Mammary epithelial cell (primary cell): ENCODE measurements at regions of chr11 and their contacts with region 1.

Region 1: DNA sequence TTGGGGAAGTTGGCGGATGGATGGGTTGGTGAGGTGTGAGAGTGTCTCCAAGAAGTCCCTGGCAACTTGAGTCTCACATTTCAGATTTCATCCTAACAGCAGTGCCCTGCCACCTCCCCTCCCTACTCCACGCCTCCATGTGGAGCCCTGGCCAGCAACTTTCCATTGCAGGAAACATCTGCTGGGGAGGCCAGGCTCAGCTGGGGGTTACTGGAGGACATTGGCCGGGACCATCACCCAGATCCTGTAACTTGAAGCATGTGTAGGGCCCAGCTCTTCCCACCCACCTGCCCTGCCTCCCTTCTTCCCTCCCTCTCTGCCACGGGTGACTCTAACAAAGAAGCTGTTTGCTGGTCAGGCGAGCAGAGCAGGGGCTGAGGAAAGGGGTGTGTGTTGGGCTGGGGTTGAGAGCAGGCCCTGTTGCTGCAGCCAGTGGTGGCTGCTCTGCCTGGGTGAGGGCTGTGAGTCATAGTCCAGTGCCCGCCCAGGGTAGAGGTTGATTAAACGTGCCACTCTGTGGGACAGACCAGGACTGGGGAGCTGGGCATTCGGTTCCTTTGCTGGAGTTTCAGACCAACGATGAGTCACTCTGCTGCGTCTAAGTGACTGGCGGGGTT is 64.0 kb downstream of the SCN3B start:
- DNase-seq: peak; percentile 11
- H3K4me3 ChIP-seq: no peak overlapping the region
- H3K27ac ChIP-seq: no peak overlapping the region
- H3K4me1 ChIP-seq: no peaks in the 10 kb centered on the region
- H3K27me3 ChIP-seq: no peaks in the 10 kb centered on the region
- CTCF ChIP-seq: no peak

Region 2: GRCh38 chr11:123525511-123525918 is 64.9 kb before region 1 on chr11:
- CTCF ChIA-PET with region 1: no interaction called
- dilution Hi-C with region 1: loop called (anchors 10 kb)
- in situ Hi-C with region 1: no loop called
- intact Hi-C with region 1: no loop called
- DNase-seq: no peak
- H3K4me3 ChIP-seq: peak overlapping the region; percentile 33 to 43 (median 36)
- H3K27ac ChIP-seq: no peak overlapping the region
- H3K4me1 ChIP-seq: no peaks in the 10 kb centered on the region
- H3K27me3 ChIP-seq: peaks cover 17% of the 10 kb centered on the region
- CTCF ChIP-seq: no peak

Region 3: GRCh38 chr11:123628936-123629683 is 38.7 kb after region 1 on chr11:
- CTCF ChIA-PET with region 1: no interaction called
- dilution Hi-C with region 1: loop called (anchors 5 kb)
- in situ Hi-C with region 1: no loop called
- intact Hi-C with region 1: no loop called
- DNase-seq: no peak
- H3K4me3 ChIP-seq: no peak overlapping the region
- H3K27ac ChIP-seq: no peak overlapping the region
- H3K4me1 ChIP-seq: no peaks in the 10 kb centered on the region
- H3K27me3 ChIP-seq: peaks cover 3% of the 10 kb centered on the region
- CTCF ChIP-seq: no peak